Activated CD4-positive, alpha-beta memory T cell treated with anti-CD3 and anti-CD28 coated beads, Interleukin-2, amount 10 ng/mL, durations not matched to agents 7 days and 5 days (primary cell): ENCODE measurements at regions of chr17 and their contacts with region 1.

Region 1: GRCh38 chr17:75289115-75289831 is at the start of gene SLC25A19:
- DNase-seq: peak; percentile 99
- H3K4me3 Mint-ChIP-seq: peak within 1 kb of the TSS; percentile 97
- H3K27ac Mint-ChIP-seq: peak within 1 kb of the TSS; percentile 100
- H3K4me1 Mint-ChIP-seq: peaks cover 29% of the 10 kb centered on the region
- H3K27me3 Mint-ChIP-seq: no peaks in the 10 kb centered on the region
- total RNA-seq, gene SLC25A19: 24.3 to 27.9 TPM

Region 2: GRCh38 chr17:74972107-74972972 is 316.9 kb before region 1 on chr17 and contains the start of gene HID1:
- CTCF ChIA-PET with region 1: no interaction called
- POLR2A ChIA-PET with region 1: no interaction called
- DNase-seq: peak; percentile 76
- H3K4me3 Mint-ChIP-seq: peak within 1 kb of the TSS; percentile 72
- H3K27ac Mint-ChIP-seq: no peak within 1 kb of the TSS
- H3K4me1 Mint-ChIP-seq: peaks cover 6% of the 10 kb centered on the region
- H3K27me3 Mint-ChIP-seq: peaks cover 33% of the 10 kb centered on the region
- total RNA-seq, gene HID1: 0.38 to 1.4 TPM

Region 3: DNA sequence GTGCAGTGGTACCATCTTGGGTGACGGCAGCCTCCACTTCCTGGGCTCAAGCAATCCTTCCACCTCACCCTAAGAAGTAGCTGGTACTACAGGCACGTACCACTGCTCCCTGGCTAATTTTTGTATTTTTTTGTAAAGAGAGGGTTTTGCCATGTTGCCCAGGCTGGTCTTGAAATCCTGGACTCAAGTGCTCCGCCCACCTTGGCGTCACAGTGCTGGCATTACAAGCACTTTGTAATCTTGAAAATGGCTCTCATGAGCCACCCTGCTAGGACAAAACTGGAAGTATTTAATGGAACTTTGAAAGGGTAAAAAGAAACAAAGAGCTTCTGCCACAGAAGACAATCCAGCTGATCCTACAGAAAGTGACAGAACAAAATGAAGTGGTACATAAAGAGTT is 115.7 kb before region 1 on chr17:
- CTCF ChIA-PET with region 1: no interaction called
- POLR2A ChIA-PET with region 1: no interaction called
- DNase-seq: no peak
- H3K4me3 Mint-ChIP-seq: no peak overlapping the region
- H3K27ac Mint-ChIP-seq: no peak overlapping the region
- H3K4me1 Mint-ChIP-seq: peaks cover 32% of the 10 kb centered on the region
- H3K27me3 Mint-ChIP-seq: no peaks in the 10 kb centered on the region

Region 4: DNA sequence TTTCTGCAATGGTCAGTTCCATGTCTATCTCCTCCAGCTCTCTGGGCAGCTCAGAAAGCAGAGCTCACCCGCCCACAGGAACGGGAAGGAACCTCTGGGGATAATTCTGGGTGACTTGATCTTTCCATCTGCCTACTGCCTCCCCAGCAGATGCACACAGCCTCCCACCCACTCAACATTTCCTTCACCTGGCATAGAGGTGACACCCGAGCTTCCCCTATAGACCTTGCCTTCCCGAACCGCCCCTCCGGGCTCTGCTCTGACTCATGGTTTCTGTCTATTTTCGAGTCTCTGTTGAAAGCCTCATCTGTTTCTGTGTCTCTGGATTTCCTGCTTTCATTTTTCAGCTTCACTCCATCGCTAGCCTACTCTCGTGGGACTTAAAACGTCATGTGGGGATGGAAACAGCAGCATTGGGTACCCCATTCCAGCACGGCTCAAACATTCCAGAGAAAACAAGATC is 39.2 kb before region 1 on chr17:
- CTCF ChIA-PET with region 1: no interaction called
- POLR2A ChIA-PET with region 1: interaction called, 17 read pairs
- DNase-seq: peak; percentile 77
- H3K4me3 Mint-ChIP-seq: peak overlapping the region; percentile 73
- H3K27ac Mint-ChIP-seq: peak overlapping the region; percentile 86
- H3K4me1 Mint-ChIP-seq: peaks cover 40% of the 10 kb centered on the region
- H3K27me3 Mint-ChIP-seq: no peaks in the 10 kb centered on the region

Region 5: GRCh38 chr17:75271233-75271954 is 17.9 kb before region 1 on chr17:
- CTCF ChIA-PET with region 1: interaction called, 105 read pairs
- POLR2A ChIA-PET with region 1: interaction called, 124 read pairs
- DNase-seq: peak; percentile 92
- H3K4me3 Mint-ChIP-seq: peak overlapping the region; percentile 85
- H3K27ac Mint-ChIP-seq: peak overlapping the region; percentile 89
- H3K4me1 Mint-ChIP-seq: peaks cover 47% of the 10 kb centered on the region
- H3K27me3 Mint-ChIP-seq: no peaks in the 10 kb centered on the region

Region 6: GRCh38 chr17:75313941-75314551 is 24.8 kb after region 1 on chr17:
- CTCF ChIA-PET with region 1: interaction called, 4 read pairs
- POLR2A ChIA-PET with region 1: interaction called, 16 read pairs
- DNase-seq: no peak
- H3K4me3 Mint-ChIP-seq: no peak overlapping the region
- H3K27ac Mint-ChIP-seq: no peak overlapping the region
- H3K4me1 Mint-ChIP-seq: peaks cover 35% of the 10 kb centered on the region
- H3K27me3 Mint-ChIP-seq: no peaks in the 10 kb centered on the region

Region 7: GRCh38 chr17:75338335-75338734 is 49.1 kb after region 1 on chr17:
- CTCF ChIA-PET with region 1: no interaction called
- POLR2A ChIA-PET with region 1: interaction called, 12 read pairs
- DNase-seq: no peak
- H3K4me3 Mint-ChIP-seq: peak overlapping the region; percentile 38
- H3K27ac Mint-ChIP-seq: peak overlapping the region; percentile 80
- H3K4me1 Mint-ChIP-seq: peaks cover 57% of the 10 kb centered on the region
- H3K27me3 Mint-ChIP-seq: no peaks in the 10 kb centered on the region

Region 8: GRCh38 chr17:75352079-75352569 is 62.9 kb after region 1 on chr17:
- CTCF ChIA-PET with region 1: no interaction called
- POLR2A ChIA-PET with region 1: no interaction called
- DNase-seq: no peak
- H3K4me3 Mint-ChIP-seq: no peak overlapping the region
- H3K27ac Mint-ChIP-seq: no peak overlapping the region
- H3K4me1 Mint-ChIP-seq: peaks cover 29% of the 10 kb centered on the region
- H3K27me3 Mint-ChIP-seq: no peaks in the 10 kb centered on the region

Region 9: DNA sequence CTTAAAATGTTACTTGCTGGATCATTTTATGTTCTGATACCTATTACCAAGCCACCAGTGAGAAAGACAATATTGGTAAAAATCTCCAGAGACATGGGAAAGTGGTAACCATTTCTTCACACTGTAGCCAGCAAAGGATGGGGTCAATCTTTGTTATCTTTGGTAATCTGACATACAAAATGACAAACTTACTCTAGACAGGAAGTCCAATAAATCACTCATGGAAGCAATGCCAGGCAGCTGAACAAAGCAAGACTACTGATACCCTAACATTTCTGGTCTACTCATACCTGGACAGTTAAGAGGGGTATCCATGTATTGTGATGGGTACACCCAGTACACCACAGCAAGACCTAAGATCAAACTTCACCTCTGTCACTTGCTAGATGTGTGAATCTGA is 97.2 kb after region 1 on chr17:
- CTCF ChIA-PET with region 1: no interaction called
- POLR2A ChIA-PET with region 1: no interaction called
- DNase-seq: no peak
- H3K4me3 Mint-ChIP-seq: no peak overlapping the region
- H3K27ac Mint-ChIP-seq: no peak overlapping the region
- H3K4me1 Mint-ChIP-seq: peaks cover 27% of the 10 kb centered on the region
- H3K27me3 Mint-ChIP-seq: no peaks in the 10 kb centered on the region

Region 10: DNA sequence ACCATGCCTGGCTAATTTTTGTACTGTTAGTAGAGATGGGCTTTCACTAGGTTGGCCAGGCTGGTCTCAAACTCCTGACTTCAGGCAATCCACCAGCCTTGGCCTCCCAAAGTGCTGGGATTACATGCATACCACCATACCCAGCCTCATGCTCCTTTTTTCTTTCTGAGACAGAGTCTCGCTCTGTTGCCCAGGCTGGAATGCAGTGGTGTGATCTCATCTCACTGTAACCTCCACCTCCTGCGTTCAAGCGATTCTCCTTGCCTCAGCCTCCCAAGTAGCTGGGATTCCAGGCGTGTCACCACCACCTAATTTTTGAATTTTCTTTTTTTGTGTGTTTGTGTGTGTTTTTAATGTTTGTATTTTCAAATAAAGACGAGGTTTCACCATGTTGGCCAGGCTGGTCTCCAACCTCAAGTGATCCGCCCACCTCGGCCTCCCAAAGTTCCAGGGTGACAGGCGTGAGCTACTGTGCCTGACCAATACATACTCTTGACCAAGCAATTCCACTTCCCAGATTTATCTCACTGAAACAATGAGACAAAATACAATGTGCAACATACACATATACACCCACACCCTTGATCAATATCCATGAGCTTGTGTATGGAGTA is 111.2 kb after region 1 on chr17:
- CTCF ChIA-PET with region 1: interaction called, 20 read pairs
- POLR2A ChIA-PET with region 1: interaction called, 38 read pairs
- DNase-seq: no peak
- H3K4me3 Mint-ChIP-seq: no peak overlapping the region
- H3K27ac Mint-ChIP-seq: no peak overlapping the region
- H3K4me1 Mint-ChIP-seq: peaks cover 55% of the 10 kb centered on the region
- H3K27me3 Mint-ChIP-seq: no peaks in the 10 kb centered on the region

Region 11: GRCh38 chr17:75412455-75413317 is 123.4 kb after region 1 on chr17:
- CTCF ChIA-PET with region 1: interaction called, 20 read pairs
- POLR2A ChIA-PET with region 1: interaction called, 5 read pairs
- DNase-seq: peak; percentile 81
- H3K4me3 Mint-ChIP-seq: no peak overlapping the region
- H3K27ac Mint-ChIP-seq: peak overlapping the region; percentile 29
- H3K4me1 Mint-ChIP-seq: peaks cover 26% of the 10 kb centered on the region
- H3K27me3 Mint-ChIP-seq: peaks cover 12% of the 10 kb centered on the region